Endothelial cell of umbilical vein (primary cell): ENCODE measurements at regions of chr2 and their contacts with region 1.

Region 1: DNA sequence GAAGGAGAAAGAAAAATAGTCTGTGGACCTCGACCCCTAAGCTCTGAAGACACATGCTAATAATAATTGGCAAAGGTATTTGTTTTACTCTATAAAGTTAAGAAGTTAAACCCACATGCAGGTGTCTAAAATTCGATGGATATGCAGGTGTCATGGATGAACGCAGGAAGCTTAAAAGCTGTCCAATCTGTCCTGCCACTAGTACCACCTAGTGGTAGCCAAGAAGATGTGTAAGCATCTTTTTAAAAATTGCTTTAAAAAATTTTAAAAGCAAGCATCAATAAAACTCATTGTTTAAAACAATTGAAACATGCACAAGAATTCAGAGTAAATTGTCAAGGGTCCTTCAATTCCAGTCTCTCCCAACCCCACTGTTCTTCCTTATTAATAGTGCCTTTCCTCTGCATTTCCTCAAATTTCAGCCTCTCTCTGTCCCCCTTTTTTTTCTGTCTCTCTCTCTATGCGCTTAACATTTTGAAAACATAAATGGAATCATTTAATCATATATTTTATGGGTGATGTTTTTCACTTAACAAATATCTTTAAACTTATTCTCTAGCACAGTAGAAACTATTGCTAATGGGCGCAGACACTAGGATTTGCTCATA is 30.6 kb upstream of the PPP3R1 start:
- DNase-seq: peak; percentile 35
- H3K4me3 ChIP-seq: no peak overlapping the region
- H3K27ac ChIP-seq: no peak overlapping the region
- H3K4me1 ChIP-seq: no peaks in the 10 kb centered on the region
- H3K27me3 ChIP-seq: no peaks in the 10 kb centered on the region
- CTCF ChIP-seq: peak; percentile 43 to 61
- POLR2A ChIP-seq: no peak

Region 2: DNA sequence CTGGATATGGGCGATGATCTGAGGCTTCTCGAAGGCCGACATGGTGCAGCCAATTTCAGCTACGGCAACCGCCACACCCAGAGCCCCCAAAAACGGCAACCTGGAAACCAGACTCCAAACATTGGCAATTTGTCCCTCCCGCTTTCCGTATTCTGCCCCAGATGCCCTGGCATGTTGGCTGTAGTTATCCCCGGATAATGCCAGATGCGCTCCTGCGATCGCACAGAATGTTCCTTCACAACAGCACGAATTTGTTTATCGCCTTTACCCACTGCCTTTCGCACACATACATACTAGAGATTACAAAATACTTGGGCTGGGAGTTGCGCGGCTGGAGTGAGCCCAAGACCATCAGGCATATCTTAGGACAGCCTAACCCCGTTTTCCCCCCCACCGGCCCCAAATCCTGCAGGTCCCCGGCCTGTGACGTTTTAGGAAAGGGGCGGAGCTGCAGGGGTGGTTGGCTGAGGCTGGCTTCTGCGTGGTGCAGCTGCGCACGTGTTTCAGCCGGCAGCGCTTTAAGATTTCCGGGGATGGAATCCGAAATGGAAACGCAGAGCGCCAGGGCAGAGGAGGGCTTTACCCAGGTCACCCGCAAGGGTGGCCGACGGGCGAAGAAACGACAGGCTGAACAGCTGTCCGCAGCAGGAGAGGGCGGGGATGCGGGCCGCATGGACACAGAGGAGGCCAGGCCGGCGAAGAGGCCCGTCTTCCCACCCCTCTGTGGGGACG is 125.3 kb before region 1 on chr2 and contains the start of gene PNO1:
- CTCF ChIA-PET with region 1: interaction called, 13 read pairs
- POLR2A ChIA-PET with region 1: no interaction called
- dilution Hi-C with region 1: no loop called
- intact Hi-C with region 1: loop called (anchors 1 kb)
- DNase-seq: peak; percentile 96
- H3K4me3 ChIP-seq: peak within 1 kb of the TSS; percentile 66 to 99 (median 89)
- H3K27ac ChIP-seq: peak within 1 kb of the TSS; percentile 83
- H3K4me1 ChIP-seq: peaks cover 21% of the 10 kb centered on the region
- H3K27me3 ChIP-seq: no peaks in the 10 kb centered on the region
- CTCF ChIP-seq: peak in 1 of 2 donors; percentile 8
- POLR2A ChIP-seq: peak; percentile 47
- total RNA-seq, gene PNO1: 19.9 and 25.6 TPM in 2 replicates

Region 3: GRCh38 chr2:68185541-68186164 is 97.3 kb before region 1 on chr2:
- CTCF ChIA-PET with region 1: interaction called, 10 read pairs
- POLR2A ChIA-PET with region 1: no interaction called
- dilution Hi-C with region 1: no loop called
- intact Hi-C with region 1: no loop called
- DNase-seq: peak; percentile 37
- H3K4me3 ChIP-seq: no peak overlapping the region
- H3K27ac ChIP-seq: no peak overlapping the region
- H3K4me1 ChIP-seq: no peaks in the 10 kb centered on the region
- H3K27me3 ChIP-seq: no peaks in the 10 kb centered on the region
- CTCF ChIP-seq: peak; percentile 70 to 80
- POLR2A ChIP-seq: no peak

Region 4: DNA sequence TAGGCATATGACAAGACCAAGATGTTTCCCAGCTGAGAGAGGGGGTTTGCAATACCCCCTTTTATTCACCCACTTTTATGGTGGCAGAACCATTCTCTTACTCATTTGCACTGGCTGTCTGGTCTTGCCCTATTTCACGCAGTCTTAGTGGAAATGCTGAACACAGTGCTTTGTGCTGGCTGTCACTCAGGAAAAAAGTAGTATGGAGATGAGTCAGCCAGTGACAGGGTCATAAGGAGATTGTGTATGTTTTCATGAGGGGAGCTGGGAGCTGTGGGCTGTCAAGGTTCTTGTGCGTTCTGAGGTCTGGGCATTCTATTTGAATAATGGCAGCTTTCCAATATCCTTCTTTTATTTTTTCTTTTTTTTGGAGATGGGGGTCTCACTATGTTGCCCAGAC is 47.8 kb after region 1 on chr2:
- CTCF ChIA-PET with region 1: no interaction called
- POLR2A ChIA-PET with region 1: no interaction called
- dilution Hi-C with region 1: no loop called
- intact Hi-C with region 1: no loop called
- DNase-seq: peak; percentile 40
- H3K4me3 ChIP-seq: no peak overlapping the region
- H3K27ac ChIP-seq: no peak overlapping the region
- H3K4me1 ChIP-seq: no peaks in the 10 kb centered on the region
- H3K27me3 ChIP-seq: no peaks in the 10 kb centered on the region
- CTCF ChIP-seq: no peak
- POLR2A ChIP-seq: no peak